Activated T-helper 1 cell treated with anti-CD3 and anti-CD28 coated beads, Interleukin-12 subunit alpha, Interleukin-12 subunit beta, Interleukin-2, Interleukin-4 antibody, amounts not matched to agents 30 ng/mL and 10 ng/mL and 1 ng/mL, durations not matched to agents 14 hours and 24 hours and 36 hours (primary cell): ENCODE measurements at regions of chr12 and their contacts with region 1.

Region 1: GRCh38 chr12:93785262-93786010 is 108.3 kb downstream of the CRADD start:
- DNase-seq: peak; percentile 53
- H3K4me3 Mint-ChIP-seq: peak overlapping the region; percentile 67
- H3K27ac Mint-ChIP-seq: peak overlapping the region; percentile 82
- H3K4me1 Mint-ChIP-seq: peaks cover 51% of the 10 kb centered on the region
- H3K27me3 Mint-ChIP-seq: no peaks in the 10 kb centered on the region

Region 2: DNA sequence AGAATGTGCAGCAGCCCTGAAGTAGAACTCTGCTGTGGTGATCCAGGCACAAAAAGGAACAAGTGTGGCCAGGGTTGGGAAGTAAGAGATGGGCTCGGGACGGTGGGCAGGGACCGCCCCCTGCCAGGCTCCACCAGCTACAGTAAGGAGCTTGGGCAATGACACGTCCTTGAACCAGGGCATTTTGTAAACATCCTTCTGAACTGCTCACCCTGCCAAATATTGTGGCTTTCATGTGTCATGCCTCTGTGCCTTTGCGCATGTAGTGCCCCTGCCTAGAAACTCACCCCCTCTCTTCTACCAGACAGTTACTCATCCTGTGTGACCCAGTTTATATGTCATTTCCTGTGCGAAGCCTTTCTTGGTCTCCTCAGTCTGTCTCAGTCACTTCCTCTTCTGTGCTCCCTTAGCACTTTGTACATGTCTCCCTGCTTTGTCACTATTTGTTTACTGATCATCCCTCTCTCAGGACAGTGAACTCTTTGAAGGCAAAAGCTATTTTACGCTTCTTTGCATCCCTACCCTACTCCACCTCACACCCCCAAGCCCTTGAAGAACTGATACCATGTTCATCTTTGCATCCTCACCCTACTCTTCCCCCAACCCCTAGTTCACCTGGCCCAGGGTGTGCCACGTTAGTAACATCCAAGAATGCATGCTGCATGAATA is 1191.6 kb before region 1 on chr12:
- intact Hi-C with region 1: loop called (anchors 10 kb)
- DNase-seq: peak; percentile 79
- H3K4me3 Mint-ChIP-seq: peak overlapping the region; percentile 72
- H3K27ac Mint-ChIP-seq: peak overlapping the region; percentile 99
- H3K4me1 Mint-ChIP-seq: peaks cover 63% of the 10 kb centered on the region
- H3K27me3 Mint-ChIP-seq: no peaks in the 10 kb centered on the region

Region 3: GRCh38 chr12:93441617-93442410 is 343.6 kb before region 1 on chr12 and contains the start of gene UBE2N:
- intact Hi-C with region 1: loop called (anchors 1 kb)
- DNase-seq: peak; percentile 95
- H3K4me3 Mint-ChIP-seq: peak within 1 kb of the TSS; percentile 96
- H3K27ac Mint-ChIP-seq: peak within 1 kb of the TSS; percentile 99
- H3K4me1 Mint-ChIP-seq: peaks cover 51% of the 10 kb centered on the region
- H3K27me3 Mint-ChIP-seq: no peaks in the 10 kb centered on the region
- total RNA-seq, gene UBE2N: 231 and 239 TPM in 2 replicates

Region 4: DNA sequence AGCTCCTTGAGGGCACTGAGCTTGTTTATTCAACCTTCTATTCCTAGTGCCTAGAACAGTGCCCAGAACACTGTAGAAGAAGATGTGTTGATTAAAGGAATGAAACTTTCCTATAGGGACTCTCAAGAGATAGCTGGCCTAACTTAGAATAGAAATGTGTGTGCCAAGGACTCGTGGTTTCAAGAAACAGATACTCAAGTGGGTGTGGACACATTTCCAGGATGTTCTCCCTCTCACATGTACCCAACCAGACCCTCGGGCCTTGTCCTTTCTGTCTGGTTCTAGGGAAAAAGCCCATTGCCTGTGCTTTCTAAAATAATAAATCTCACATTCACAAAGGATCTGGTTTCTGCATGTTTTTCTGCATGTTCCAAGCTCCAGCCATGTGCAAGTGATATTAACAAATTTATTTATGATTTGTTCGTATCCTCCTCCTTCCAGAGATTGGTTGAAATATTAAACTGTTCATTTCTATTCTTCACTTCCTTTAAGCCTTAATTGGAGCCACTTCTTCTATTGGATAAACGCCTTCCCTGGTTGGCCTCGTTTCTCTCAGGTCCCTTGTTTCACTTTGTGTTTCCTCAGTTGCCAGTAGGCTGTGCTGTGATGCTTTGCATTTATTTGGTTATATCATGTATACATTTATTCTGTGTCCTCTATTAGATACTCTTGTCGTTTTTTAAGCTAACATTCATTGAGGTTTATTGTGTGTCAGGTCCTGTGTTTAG is 18.5 kb before region 1 on chr12:
- intact Hi-C with region 1: loop called (anchors 2 kb)
- DNase-seq: peak; percentile 40
- H3K4me3 Mint-ChIP-seq: peak overlapping the region; percentile 0
- H3K27ac Mint-ChIP-seq: no peak overlapping the region
- H3K4me1 Mint-ChIP-seq: peaks cover 34% of the 10 kb centered on the region
- H3K27me3 Mint-ChIP-seq: peaks cover 6% of the 10 kb centered on the region

Region 5: DNA sequence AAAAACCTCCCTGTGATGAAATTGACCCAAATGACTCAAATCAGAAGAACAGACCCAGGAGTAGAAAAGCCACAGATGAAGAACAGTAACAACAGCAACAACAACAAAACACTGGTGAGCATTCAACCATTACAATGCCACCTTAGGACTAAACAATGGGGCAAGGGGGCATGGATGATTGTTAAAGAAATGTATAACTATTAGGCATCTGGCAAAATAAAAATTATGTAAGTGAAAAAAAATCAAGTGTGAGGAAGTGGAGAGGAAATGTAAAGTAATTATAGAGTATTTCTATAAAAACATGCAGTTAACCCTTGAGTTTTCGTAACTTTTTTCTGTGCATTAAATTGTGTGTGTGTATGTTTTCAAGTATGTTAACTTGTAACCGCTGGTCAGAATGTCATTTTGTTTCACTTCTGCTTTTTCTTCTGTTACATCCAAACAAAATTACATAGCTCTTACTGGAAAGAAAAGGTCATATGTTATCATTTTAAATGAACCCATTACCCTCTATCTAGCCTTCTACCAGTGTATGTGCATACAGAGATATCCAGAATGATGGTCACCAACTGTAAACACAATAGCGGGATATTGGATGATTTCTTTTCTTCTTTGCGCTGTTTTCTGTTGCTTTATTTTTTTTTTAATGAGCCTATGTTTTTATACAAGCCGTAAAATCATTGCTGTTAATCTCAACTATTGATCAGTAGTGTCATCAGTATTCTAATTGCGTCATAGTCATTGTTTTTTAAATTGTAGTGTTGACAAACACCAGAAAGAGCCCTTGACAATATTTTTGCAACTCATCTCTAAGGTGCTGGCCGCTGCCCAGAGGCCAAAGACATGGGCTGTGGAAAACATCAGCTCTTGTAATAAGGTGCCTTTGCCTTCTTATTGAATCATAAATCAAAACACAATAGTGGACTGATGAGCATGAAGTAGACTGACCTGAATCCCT is 62.4 kb after region 1 on chr12:
- intact Hi-C with region 1: loop called (anchors 1 kb)
- DNase-seq: peak; percentile 33
- H3K4me3 Mint-ChIP-seq: peak overlapping the region; percentile 49
- H3K27ac Mint-ChIP-seq: peak overlapping the region; percentile 86
- H3K4me1 Mint-ChIP-seq: peaks cover 74% of the 10 kb centered on the region
- H3K27me3 Mint-ChIP-seq: no peaks in the 10 kb centered on the region

Region 6: DNA sequence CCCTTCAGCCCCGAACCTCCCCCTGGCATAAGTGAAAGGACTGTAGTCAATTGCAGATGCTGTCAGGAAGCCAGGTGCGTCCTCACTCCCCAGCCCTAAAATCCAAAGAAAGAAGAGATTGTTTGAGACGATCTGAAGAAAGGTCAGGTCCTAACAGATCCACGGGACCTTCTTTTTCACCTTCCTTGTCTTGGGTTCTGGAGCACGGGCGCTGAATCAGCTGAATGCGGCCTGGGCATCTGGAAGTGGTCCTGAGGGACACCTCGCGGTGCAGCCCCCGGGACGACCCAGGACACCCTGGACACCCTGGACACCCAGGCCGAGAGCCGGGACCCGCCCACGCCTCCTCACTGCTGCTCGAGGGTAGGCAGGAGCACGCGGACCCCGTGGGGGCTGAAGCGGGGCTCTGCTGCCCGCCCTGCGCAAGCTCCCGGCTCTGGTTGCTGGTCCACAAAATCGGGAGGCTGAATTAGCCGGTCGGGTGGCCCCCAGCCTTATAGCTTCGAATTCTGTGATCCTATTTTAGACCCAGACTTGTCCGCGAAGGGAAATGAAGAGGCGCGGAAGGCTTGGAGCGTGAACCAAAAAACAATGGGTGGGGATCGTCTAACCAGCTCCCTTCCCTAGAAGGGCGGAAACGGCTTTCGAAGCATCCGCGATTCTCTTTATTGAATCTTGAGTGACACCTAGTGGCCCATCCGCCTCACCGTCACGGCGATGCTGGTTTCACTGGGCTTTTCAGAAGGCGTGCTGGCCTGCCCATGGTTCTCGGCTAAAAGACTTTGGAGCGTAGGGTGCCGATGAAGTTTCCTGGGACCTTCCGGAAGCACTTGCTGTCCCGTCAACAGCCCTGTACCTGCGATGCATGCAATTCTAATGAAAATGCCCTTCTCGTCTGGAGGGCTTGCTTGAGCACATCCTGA is 316.6 kb after region 1 on chr12:
- intact Hi-C with region 1: loop called (anchors 1 kb)
- DNase-seq: peak; percentile 81
- H3K4me3 Mint-ChIP-seq: peak overlapping the region; percentile 84
- H3K27ac Mint-ChIP-seq: peak overlapping the region; percentile 72
- H3K4me1 Mint-ChIP-seq: peaks cover 37% of the 10 kb centered on the region
- H3K27me3 Mint-ChIP-seq: peaks cover 10% of the 10 kb centered on the region